Heart left ventricle (tissue), 16 donors: ENCODE measurements at regions of chr4 and their contacts with region 1.

Region 1: DNA sequence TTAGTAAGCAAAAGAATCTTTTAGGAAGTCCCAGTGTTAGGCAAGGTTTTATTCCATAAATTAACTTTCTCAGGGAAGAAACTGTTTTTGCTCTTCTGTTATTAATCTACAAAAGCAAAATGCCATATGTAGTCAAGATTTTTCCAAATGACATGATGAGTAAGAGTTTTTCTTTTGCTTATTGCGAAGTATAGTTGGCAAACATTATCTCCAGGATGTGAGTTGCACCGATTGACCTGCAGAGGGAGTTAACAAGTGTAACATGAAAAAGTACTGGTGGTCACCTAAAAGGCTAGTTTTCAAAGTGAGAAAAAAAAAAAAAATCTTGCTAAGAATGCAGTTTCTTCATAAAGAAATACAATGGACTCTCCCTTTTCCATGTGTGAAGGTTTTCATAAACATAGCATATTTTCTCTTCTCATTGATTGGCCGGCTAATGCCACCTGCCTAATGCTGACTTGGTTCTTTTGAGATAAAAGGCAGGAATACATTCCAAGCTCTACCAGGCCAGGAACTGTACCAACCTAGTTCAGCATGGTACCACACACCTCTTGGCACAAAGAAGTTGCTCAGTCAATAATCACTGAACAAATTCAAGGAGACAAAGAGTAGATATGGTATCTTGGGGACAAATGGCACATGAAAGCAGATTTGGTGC is 100.2 kb downstream of the LNX1 start:
- DNase-seq: peak in 1 of 5 donors; percentile 25
- ATAC-seq: peak in 2 of 4 donors; percentile 48 to 73
- H3K4me3 ChIP-seq: no peak overlapping the region
- H3K27ac ChIP-seq: peak overlapping the region in 2 of 12 donors; percentile 4 to 47
- H3K4me1 ChIP-seq: peaks cover 0 to 11% (median 2%) of the 10 kb centered on the region in 12 donors
- H3K27me3 ChIP-seq: no peaks in the 10 kb centered on the region
- CTCF ChIP-seq: peak; percentile 44 to 80 (median 65)
- POLR2A ChIP-seq: no peak

Region 2: GRCh38 chr4:53208753-53209152 is 282.3 kb before region 1 on chr4:
- intact Hi-C with region 1: no loop called
- DNase-seq: no peak
- ATAC-seq: no peak
- H3K4me3 ChIP-seq: no peak overlapping the region
- H3K27ac ChIP-seq: no peak overlapping the region
- H3K4me1 ChIP-seq: no peaks in the 10 kb centered on the region
- H3K27me3 ChIP-seq: no peaks in the 10 kb centered on the region
- CTCF ChIP-seq: no peak
- POLR2A ChIP-seq: no peak

Region 3: DNA sequence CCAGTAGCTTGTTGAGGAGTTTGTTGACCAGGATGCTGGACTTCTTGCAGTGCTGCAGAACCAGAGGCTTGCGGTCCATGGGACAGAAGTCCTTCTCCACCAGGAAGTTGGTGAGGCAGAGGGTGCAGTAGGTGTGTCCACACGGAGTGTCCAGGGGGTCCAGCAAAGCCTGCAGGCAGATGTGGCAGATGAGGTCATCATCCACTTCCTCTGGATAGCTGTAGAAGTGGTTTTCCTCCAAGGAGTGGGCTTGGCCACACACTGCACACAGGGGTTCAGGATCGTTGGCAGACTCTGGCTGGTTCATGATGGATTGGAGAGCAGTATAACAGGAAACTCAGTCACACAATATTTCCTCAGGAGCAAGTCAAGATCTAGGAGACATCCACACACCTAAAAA is 82.6 kb after region 1 on chr4:
- intact Hi-C with region 1: no loop called
- DNase-seq: no peak
- ATAC-seq: no peak
- H3K4me3 ChIP-seq: no peak overlapping the region
- H3K27ac ChIP-seq: no peak overlapping the region
- H3K4me1 ChIP-seq: peaks cover 0 to 11% (median 3%) of the 10 kb centered on the region in 12 donors
- H3K27me3 ChIP-seq: no peaks in the 10 kb centered on the region
- CTCF ChIP-seq: no peak
- POLR2A ChIP-seq: no peak

Region 4: DNA sequence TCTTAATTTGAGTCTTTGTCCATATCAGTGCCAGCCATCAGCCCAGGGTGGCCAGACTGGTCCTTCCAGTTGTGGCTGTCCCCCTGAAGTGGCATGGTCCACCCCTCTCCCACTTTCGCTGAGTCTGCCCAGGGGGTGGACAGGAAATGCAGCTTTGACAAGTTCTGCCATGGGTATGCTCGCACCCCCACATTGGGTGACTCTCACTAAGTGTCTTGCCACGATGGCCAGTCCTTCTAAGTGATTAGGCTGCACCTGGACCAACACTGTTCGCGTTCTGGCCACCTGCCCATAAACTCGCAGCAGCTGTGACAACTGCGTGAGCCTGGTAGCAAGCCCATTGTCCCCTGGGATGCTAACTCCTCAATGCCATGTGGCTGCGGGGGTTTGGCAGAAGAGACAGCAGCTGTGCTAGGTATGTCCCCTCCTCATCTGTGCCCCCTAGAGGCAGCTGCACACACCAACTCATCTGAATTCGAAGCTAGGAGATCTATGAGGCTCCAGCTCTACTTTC is 110.2 kb after region 1 on chr4:
- intact Hi-C with region 1: loop called in 1 of 10 experiments (anchors 10 kb)
- DNase-seq: peak in 3 of 5 donors; percentile 11 to 33 (median 25)
- ATAC-seq: peak in 2 of 4 donors; percentile 49 to 59
- H3K4me3 ChIP-seq: no peak overlapping the region
- H3K27ac ChIP-seq: no peak overlapping the region
- H3K4me1 ChIP-seq: peaks cover 0 to 7% (median 0%) of the 10 kb centered on the region in 12 donors
- H3K27me3 ChIP-seq: no peaks in the 10 kb centered on the region
- CTCF ChIP-seq: peak in 6 of 12 donors; percentile 21 to 43 (median 35)
- POLR2A ChIP-seq: no peak

Region 5: GRCh38 chr4:53908661-53909078 is 417.6 kb after region 1 on chr4:
- intact Hi-C with region 1: loop called in 3 of 10 experiments (anchors 10 kb)
- DNase-seq: peak in 3 of 5 donors; percentile 37 to 50 (median 44)
- ATAC-seq: peak; percentile 84 to 94 (median 93)
- H3K4me3 ChIP-seq: peak overlapping the region in 8 of 12 donors; percentile 12 to 42 (median 27)
- H3K27ac ChIP-seq: peak overlapping the region in 8 of 12 donors; percentile 27 to 63 (median 40)
- H3K4me1 ChIP-seq: peaks cover 0 to 37% (median 14%) of the 10 kb centered on the region in 12 donors
- H3K27me3 ChIP-seq: peaks cover 0 to 32% (median 11%) of the 10 kb centered on the region in 9 donors
- CTCF ChIP-seq: peak; percentile 40 to 83 (median 67)
- POLR2A ChIP-seq: no peak

Region 6: GRCh38 chr4:54217642-54218495 is 726.8 kb after region 1 on chr4:
- intact Hi-C with region 1: loop called in 4 of 10 experiments (anchors 5 to 10 kb)
- DNase-seq: peak; percentile 77 to 83 (median 80)
- ATAC-seq: peak; percentile 77 to 92 (median 92)
- H3K4me3 ChIP-seq: peak overlapping the region in 10 of 12 donors; percentile 28 to 58 (median 48)
- H3K27ac ChIP-seq: peak overlapping the region in 4 of 12 donors; percentile 39 to 41 (median 40)
- H3K4me1 ChIP-seq: peaks cover 0 to 18% (median 5%) of the 10 kb centered on the region in 12 donors
- H3K27me3 ChIP-seq: peaks cover 0 to 41% (median 0%) of the 10 kb centered on the region in 9 donors
- CTCF ChIP-seq: peak; percentile 80 to 97 (median 94)
- POLR2A ChIP-seq: no peak

Region 7: DNA sequence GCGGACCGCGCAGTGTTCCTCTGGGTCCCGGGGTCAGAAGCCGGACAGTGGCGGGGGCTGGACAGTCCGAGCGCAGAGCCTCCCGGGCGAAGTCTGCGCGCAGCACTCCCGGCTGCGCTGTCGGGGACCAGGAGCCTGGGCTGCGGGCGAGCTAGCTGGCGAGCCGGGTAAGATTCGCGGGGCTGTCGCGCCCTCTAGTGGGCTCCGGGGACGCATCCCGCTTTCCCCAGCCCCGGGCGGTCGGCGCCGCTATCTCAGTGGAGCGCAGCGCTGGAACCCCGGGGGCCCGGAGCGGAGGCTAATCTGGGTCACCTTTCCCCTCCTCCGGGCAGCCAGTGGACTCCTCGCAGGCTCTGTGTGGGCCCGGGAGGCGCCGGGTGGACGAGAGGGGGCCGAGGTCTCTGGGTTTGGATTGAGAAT is 742.2 kb after region 1 on chr4:
- intact Hi-C with region 1: loop called in 5 of 10 experiments (anchors 5 to 10 kb)
- DNase-seq: peak; percentile 85 to 92 (median 89)
- ATAC-seq: peak; percentile 64 to 88 (median 85)
- H3K4me3 ChIP-seq: peak overlapping the region; percentile 22 to 80 (median 58)
- H3K27ac ChIP-seq: peak overlapping the region in 11 of 12 donors; percentile 19 to 89 (median 68)
- H3K4me1 ChIP-seq: peaks cover 6 to 51% (median 40%) of the 10 kb centered on the region in 12 donors
- H3K27me3 ChIP-seq: peaks cover 26 to 51% (median 43%) of the 10 kb centered on the region in 9 donors
- CTCF ChIP-seq: peak; percentile 67 to 89 (median 80)
- POLR2A ChIP-seq: no peak